ENCODE measurements at regions of chr5 and their contacts with region 1.

Region 1: GRCh38 chr5:112604732-112605630 is 132.7 kb upstream of the APC start:
- DNase-seq: no peak
- ATAC-seq: peak; percentile 98
- H3K4me3 Mint-ChIP-seq: no peak overlapping the region
- H3K27ac Mint-ChIP-seq: no peak overlapping the region
- H3K4me1 Mint-ChIP-seq: peaks cover 11% of the 10 kb centered on the region
- H3K27me3 Mint-ChIP-seq: no peaks in the 10 kb centered on the region
- CTCF ChIP-seq: no peak

Region 2: DNA sequence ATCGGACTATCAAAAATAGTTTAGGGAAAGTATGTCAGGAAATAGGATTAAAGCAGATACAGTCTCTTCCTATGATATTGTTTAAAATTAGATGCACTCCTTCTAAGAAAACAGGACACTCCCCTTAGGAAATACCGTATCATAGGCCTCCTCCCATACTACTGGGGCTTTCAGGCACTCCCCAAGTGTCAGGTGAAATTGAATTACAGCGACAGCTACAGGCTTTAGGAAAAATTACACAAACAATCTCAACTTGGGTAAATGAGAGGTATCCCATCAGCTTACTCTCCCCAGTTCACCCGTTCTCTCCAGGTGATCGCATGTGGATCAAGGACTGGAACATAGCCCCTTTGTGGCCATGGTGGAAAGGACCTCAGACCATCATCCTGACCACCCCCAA is 75.5 kb before region 1 on chr5:
- CTCF ChIA-PET with region 1: no interaction called
- POLR2A ChIA-PET with region 1: no interaction called
- intact Hi-C with region 1: no loop called
- DNase-seq: no peak
- ATAC-seq: peak; percentile 53
- H3K4me3 Mint-ChIP-seq: no peak overlapping the region
- H3K27ac Mint-ChIP-seq: peak overlapping the region; percentile 48
- H3K4me1 Mint-ChIP-seq: peaks cover 96% of the 10 kb centered on the region
- H3K27me3 Mint-ChIP-seq: no peaks in the 10 kb centered on the region
- CTCF ChIP-seq: no peak

Region 3: GRCh38 chr5:112586596-112587062 is 18.4 kb before region 1 on chr5:
- CTCF ChIA-PET with region 1: interaction called, 5 read pairs
- POLR2A ChIA-PET with region 1: no interaction called
- intact Hi-C with region 1: loop called (anchors 2 kb)
- DNase-seq: peak; percentile 52
- ATAC-seq: peak; percentile 97
- H3K4me3 Mint-ChIP-seq: peak overlapping the region; percentile 38
- H3K27ac Mint-ChIP-seq: no peak overlapping the region
- H3K4me1 Mint-ChIP-seq: peaks cover 37% of the 10 kb centered on the region
- H3K27me3 Mint-ChIP-seq: no peaks in the 10 kb centered on the region
- CTCF ChIP-seq: no peak

Region 4: GRCh38 chr5:112757468-112758208 is 152.7 kb after region 1 on chr5:
- CTCF ChIA-PET with region 1: interaction called, 8 read pairs
- POLR2A ChIA-PET with region 1: no interaction called
- intact Hi-C with region 1: loop called (anchors 1 kb)
- DNase-seq: no peak
- ATAC-seq: peak; percentile 81
- H3K4me3 Mint-ChIP-seq: no peak overlapping the region
- H3K27ac Mint-ChIP-seq: peak overlapping the region; percentile 46
- H3K4me1 Mint-ChIP-seq: peaks cover 12% of the 10 kb centered on the region
- H3K27me3 Mint-ChIP-seq: no peaks in the 10 kb centered on the region
- CTCF ChIP-seq: peak; percentile 82

Measured in activated B cell treated with CpG ODN at 0.5 μM for 24 hours (primary cell).